ENCODE measurements at regions of chr17 and their contacts with region 1.

Region 1: GRCh38 chr17:4565209-4566141 is 5.1 kb upstream of the GGT6 start:
- DNase-seq: peak; percentile 36
- H3K4me3 ChIP-seq: no peak overlapping the region
- CTCF ChIP-seq: peak; percentile 84

Region 2: DNA sequence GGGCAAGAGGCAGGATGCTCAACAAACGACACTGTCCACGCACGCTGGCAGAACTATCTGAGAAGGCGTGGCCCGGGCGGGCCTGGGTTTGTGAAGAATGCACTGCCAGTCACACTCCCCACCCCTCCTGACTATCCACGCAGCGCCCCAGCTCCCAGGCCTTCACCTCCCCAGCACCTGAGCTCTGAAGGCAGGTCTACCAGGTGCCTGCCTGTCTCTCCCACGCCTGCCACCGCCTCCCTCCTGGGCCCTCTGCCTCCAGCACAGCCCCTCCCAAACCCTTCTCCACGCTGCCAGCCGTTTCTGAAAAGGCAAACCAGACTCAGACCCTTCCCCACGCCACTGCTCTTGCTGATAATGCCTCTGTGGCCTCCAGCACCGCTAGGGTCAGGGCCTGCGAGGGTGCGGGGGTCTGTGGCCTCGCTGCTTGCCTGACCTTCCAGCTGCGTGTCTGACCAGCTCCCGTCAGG is 21.9 kb before region 1 on chr17:
- CTCF ChIA-PET with region 1: interaction called, 137 read pairs
- POLR2A ChIA-PET with region 1: no interaction called
- DNase-seq: no peak
- H3K4me3 ChIP-seq: no peak overlapping the region
- CTCF ChIP-seq: no peak

Region 3: DNA sequence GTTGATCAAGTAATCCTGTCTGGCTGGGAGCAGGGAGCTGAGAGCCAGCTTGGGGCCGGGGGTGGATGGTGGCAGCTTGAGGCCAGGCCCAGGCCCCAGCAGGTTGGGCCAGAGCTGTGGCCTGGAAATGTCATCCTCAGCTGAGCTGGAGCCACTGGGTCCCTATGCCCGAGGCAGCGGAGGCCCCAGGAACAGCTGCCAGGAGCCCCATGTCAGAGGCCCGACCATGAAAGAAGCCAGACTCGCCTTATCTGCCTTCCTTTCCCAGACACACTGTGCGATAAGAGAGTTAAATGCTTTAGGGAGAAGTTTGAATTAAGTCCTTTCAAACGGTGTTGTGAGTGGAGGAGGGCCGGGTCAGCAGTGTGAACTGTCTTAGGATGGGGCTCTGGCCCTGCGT is 22.3 kb after region 1 on chr17:
- CTCF ChIA-PET with region 1: interaction called, 34 read pairs
- POLR2A ChIA-PET with region 1: no interaction called
- DNase-seq: no peak
- H3K4me3 ChIP-seq: no peak overlapping the region
- CTCF ChIP-seq: no peak

Region 4: DNA sequence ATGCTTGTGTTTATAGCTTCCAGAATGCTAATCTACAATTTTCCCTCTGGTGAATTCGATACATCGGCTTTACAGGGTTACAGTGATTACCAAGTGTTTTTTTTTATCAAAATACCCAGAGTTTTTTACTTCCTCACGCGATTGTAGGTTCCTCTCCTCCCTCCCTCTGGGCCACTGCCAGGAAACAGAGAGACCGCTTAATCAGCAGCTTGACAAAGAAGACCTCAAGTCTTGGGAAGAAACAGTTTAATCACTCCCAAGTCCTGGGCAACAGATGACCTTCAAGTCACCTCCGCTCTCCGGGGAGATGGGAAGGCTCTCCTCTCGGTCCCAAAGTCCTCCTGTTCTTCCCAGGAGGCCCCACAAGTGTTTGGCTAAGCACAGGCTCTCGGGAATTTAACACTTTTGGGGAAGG is 42.3 kb after region 1 on chr17:
- CTCF ChIA-PET with region 1: interaction called, 38 read pairs
- POLR2A ChIA-PET with region 1: no interaction called
- DNase-seq: no peak
- H3K4me3 ChIP-seq: no peak overlapping the region
- CTCF ChIP-seq: no peak

Region 5: GRCh38 chr17:4625181-4625617 is 59.7 kb after region 1 on chr17:
- CTCF ChIA-PET with region 1: interaction called, 268 read pairs
- POLR2A ChIA-PET with region 1: no interaction called
- DNase-seq: no peak
- H3K4me3 ChIP-seq: no peak overlapping the region
- CTCF ChIP-seq: no peak

Region 6: DNA sequence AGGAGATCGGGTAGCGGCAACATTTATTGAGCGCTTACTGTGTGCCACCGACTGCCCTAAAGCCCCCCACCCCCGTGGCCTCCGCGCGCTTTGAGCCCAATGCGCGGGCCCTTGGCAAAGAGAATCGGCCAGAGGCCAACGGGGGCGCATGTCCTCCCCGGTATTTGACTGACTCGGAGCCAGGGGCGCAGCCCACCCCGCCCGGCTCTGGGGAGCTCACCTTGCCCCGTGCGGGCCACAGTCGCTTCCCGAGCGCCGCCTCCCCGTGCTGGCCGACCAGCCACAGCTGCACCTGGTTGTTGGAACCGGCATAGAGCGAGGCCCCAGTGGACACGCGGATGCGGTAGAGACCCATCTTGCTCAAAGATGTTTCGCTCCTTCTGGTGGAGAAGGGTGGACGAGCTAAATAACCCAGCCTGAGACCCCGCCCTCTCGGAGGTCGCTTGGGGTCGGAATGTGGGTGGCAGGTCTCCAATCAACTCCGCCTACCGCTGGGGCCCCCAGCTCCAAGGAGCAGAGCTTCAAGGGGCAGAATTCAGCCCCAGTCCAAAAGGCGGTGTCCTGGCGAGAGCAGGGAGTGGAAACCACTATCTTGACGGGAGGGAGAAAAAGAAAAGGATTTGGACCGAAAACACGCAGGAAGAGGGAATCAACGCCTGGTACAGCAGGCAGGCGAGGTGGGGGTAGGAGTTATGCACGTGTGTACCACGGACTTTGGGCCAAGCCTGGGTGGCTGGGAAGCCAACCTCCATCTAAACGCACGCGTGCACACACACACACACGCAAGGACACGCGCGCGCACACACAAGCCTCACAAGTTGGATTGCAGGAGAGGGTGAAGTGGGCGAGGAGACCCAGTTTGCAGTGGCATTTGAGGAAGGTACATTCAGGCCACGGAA is 76.1 kb after region 1 on chr17 and contains the start of gene ALOX15:
- CTCF ChIA-PET with region 1: interaction called, 69 read pairs
- POLR2A ChIA-PET with region 1: no interaction called
- DNase-seq: no peak
- H3K4me3 ChIP-seq: no peak within 1 kb of the TSS
- CTCF ChIP-seq: no peak